Posterior cingulate gyrus (tissue), 11 donors: ENCODE measurements at regions of chr22 and their contacts with region 1.

Region 1: GRCh38 chr22:46071451-46072109 is 78.7 kb upstream of the PPARA start:
- DNase-seq: peak; percentile 85 to 97 (median 88)

Region 2: DNA sequence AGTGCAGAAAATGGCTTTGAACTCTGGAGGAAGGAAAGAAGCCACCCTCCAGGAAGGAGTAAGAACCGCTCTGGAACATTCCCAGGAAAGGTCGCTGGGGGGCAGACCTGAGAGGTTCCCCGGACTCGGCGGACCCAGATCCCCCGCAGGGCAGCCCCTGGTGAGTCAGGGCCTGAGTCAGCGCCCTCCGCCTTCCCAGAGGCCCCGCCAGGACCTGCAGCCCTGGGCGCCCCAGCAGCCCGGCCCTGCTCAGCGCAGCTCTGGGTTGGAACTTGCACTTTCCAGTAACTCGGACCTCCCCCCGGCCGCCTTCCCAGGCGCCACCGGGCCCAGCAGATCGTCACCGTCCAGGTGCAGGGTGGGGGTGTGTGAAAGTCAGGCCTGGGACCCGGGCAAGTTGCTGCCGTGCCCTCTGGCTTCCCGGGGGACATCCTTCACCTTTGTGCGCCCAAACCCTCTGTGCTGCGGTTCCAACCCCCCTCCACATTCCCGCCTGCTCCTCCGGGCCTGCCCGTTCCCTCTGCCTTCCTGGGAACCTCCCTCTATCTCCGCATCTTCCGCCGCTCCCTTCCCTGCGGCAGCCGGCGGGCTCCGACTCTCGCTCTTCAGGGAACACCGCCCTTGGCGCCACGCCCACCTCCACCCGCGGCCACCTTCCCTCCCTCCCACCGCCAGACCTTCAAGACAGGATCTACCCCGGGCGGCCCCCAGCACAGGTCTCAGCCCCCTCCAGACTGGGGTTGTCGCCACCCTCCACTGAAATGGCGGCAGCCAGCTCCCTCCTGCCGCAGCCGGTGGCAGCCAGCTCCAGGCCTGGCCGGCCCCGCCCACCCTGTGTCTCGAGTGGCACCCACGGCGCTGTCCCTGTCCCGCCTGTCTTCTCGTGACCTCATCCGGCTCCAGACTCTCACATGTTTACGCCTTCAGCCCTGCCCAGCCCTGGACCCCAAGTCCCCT is 57.8 kb before region 1 on chr22:
- intact Hi-C with region 1: loop called (anchors 5 kb)
- DNase-seq: peak; percentile 60 to 97 (median 83)

Region 3: GRCh38 chr22:46057762-46058420 is 13.7 kb before region 1 on chr22:
- intact Hi-C with region 1: loop called (anchors 2 kb)
- DNase-seq: peak in 8 of 10 donors; percentile 10 to 89 (median 44)

Region 4: DNA sequence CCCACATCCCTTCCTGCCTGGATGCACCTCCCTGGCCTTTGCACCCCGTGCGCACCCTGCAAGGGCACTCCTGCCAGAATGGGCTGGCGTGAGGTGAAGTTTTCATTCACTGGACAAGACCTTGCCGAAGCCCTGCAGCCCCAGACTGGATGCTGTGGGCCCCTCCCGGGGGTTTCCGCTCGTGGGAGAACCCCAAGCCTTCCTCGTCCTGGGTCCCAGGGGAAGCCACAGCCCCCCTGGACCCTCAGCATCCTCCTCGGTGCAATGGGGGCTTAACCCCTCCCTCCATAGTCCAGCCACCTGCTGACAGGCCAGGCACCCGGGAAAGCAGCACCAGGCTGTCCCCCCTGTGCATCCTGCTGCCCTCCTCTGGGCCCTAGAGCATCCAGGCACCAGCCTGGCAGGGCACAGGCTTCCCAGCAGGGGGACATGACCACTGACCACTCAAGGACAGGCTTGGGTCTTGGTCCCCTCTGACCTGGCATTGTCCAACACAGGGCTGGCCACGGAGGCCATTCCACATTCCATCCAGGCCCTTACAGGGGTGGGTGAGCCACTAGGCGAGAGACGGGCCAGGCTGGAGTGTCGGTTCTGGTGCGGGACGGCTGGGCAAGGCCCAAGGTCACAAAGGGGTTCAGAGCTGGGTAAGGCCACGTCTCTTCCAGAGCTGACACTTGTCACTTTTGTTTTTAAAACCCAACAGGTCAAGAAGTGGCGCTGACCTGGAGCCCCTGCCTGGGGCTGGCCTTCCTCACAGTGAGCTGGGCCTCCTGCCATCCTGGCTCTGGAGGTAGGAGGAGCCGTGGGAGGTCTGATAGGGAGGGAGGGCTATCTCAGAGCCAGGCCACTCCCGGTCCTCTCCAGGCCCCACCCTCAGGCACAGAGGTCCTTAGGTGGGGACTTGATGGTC is 37.2 kb after region 1 on chr22:
- intact Hi-C with region 1: loop called (anchors 5 kb)
- DNase-seq: no peak